ENCODE measurements at regions of chr3 and their contacts with region 1.

Region 1: DNA sequence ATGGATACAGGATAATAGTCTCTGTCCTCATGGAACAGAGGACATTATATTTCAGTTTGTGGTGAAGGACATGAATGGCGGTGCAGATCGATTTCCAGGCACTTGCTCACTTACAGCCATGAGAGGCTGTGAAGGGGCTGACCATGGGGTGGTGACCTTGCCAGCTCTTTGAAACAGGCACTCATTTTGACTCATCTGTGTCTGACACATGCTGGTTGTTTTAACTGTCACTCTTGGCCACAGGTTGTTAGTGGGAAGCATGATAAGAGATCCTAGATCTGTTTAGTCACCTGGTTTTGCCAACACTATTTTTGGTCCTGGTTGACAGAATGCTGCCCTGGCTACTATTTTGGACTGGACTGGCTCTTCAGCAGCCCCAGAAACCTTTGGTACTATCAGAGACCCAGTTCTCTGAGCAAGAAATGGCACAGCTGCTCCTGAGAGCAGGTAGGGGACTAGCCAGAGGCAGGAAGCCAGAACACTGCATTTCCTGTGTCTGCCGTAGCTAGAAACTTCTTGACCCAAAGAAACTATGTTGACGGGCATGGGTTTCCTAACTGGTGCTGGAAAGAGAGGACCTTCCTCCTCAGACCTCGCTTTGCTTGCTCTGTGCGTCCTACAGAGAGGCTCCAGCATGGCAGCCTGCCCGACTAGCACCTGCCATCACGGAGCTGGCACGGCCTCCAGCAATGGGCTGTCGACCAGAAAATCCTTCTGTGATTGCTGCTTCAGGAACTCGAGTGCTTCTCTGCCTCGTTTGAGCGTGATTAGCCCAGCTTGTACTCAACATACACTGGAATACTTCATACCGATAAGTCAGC is 6.3 kb downstream of the PXYLP1 start:
- DNase-seq: no peak
- ATAC-seq: no peak
- H3K4me3 ChIP-seq: no peak overlapping the region
- H3K27ac ChIP-seq: no peak overlapping the region
- H3K4me1 ChIP-seq: peaks cover 61% of the 10 kb centered on the region
- H3K27me3 ChIP-seq: no peaks in the 10 kb centered on the region
- CTCF ChIP-seq: no peak
- EP300 ChIP-seq: no peak
- POLR2A ChIP-seq: no peak
- RAD21 ChIP-seq: no peak

Region 2: GRCh38 chr3:141030296-141030695 is 207.6 kb before region 1 on chr3:
- CTCF ChIA-PET with region 1: no interaction called
- POLR2A ChIA-PET with region 1: no interaction called
- in situ Hi-C with region 1: no loop called
- intact Hi-C with region 1: no loop called
- DNase-seq: no peak
- ATAC-seq: no peak
- H3K4me3 ChIP-seq: no peak overlapping the region
- H3K27ac ChIP-seq: no peak overlapping the region
- H3K4me1 ChIP-seq: no peaks in the 10 kb centered on the region
- H3K27me3 ChIP-seq: no peaks in the 10 kb centered on the region
- CTCF ChIP-seq: no peak
- EP300 ChIP-seq: no peak
- POLR2A ChIP-seq: no peak
- RAD21 ChIP-seq: no peak

Region 3: DNA sequence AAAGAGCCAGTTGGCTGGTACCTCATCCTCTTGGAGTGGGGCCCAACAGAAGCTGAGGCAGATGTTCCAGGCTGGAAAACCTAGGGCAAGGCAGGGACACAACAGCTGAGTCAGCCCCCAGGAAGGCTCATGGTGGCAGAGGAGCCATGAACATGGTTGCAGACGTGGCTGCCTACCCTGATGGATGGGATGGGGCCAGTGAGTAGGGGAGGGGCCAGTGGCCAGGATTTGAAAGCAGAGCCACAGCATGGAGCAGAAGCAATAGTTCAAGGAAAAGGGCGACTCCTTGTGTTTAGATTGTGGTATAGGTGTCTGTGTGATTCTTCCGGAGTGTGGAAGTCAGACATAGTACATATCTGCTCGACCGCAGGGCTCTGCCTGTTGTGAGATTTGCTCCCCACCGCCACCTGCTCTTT is 17.9 kb after region 1 on chr3:
- CTCF ChIA-PET with region 1: interaction called, 14 read pairs
- POLR2A ChIA-PET with region 1: no interaction called
- in situ Hi-C with region 1: no loop called
- intact Hi-C with region 1: loop called (anchors 1 kb)
- DNase-seq: peak; percentile 35
- ATAC-seq: peak; percentile 95
- H3K4me3 ChIP-seq: no peak overlapping the region
- H3K27ac ChIP-seq: no peak overlapping the region
- H3K4me1 ChIP-seq: no peaks in the 10 kb centered on the region
- H3K27me3 ChIP-seq: no peaks in the 10 kb centered on the region
- CTCF ChIP-seq: peak; percentile 69
- EP300 ChIP-seq: no peak
- POLR2A ChIP-seq: no peak
- RAD21 ChIP-seq: peak; percentile 52; the same call in 1 of the 2 replicates

Region 4: GRCh38 chr3:141271279-141272030 is 33.5 kb after region 1 on chr3:
- CTCF ChIA-PET with region 1: no interaction called
- POLR2A ChIA-PET with region 1: interaction called, 3 read pairs
- in situ Hi-C with region 1: loop called (anchors 5 kb)
- intact Hi-C with region 1: no loop called
- DNase-seq: peak; percentile 52
- ATAC-seq: peak; percentile 88
- H3K4me3 ChIP-seq: no peak overlapping the region; a peak in 1 of 6 replicates
- H3K27ac ChIP-seq: peak overlapping the region; percentile 33
- H3K4me1 ChIP-seq: peaks cover 37% of the 10 kb centered on the region
- H3K27me3 ChIP-seq: no peaks in the 10 kb centered on the region; a peak in 1 of 5 replicates
- CTCF ChIP-seq: no peak
- EP300 ChIP-seq: 0 out of 4 replicates have a peak, but pooled peaks of 1 of the 2 experiments have one; percentile 15
- POLR2A ChIP-seq: no peak
- RAD21 ChIP-seq: no peak

Region 5: GRCh38 chr3:141279077-141279967 is 41.4 kb after region 1 on chr3:
- CTCF ChIA-PET with region 1: interaction called, 15 read pairs
- POLR2A ChIA-PET with region 1: no interaction called
- in situ Hi-C with region 1: loop called (anchors 5 kb)
- intact Hi-C with region 1: loop called (anchors 1 kb)
- DNase-seq: peak; percentile 23
- ATAC-seq: peak; percentile 81
- H3K4me3 ChIP-seq: no peak overlapping the region
- H3K27ac ChIP-seq: no peak overlapping the region
- H3K4me1 ChIP-seq: peaks cover 12% of the 10 kb centered on the region
- H3K27me3 ChIP-seq: no peaks in the 10 kb centered on the region
- CTCF ChIP-seq: peak; percentile 73
- EP300 ChIP-seq: no peak
- POLR2A ChIP-seq: no peak
- RAD21 ChIP-seq: no peak; the same call in 1 of the 2 replicates

Region 6: GRCh38 chr3:141291559-141292355 is 53.8 kb after region 1 on chr3:
- CTCF ChIA-PET with region 1: no interaction called
- POLR2A ChIA-PET with region 1: no interaction called
- in situ Hi-C with region 1: no loop called
- intact Hi-C with region 1: no loop called
- DNase-seq: no peak
- ATAC-seq: no peak
- H3K4me3 ChIP-seq: no peak overlapping the region
- H3K27ac ChIP-seq: no peak overlapping the region
- H3K4me1 ChIP-seq: no peaks in the 10 kb centered on the region
- H3K27me3 ChIP-seq: no peaks in the 10 kb centered on the region
- CTCF ChIP-seq: no peak
- EP300 ChIP-seq: no peak
- POLR2A ChIP-seq: no peak
- RAD21 ChIP-seq: no peak

Region 7: GRCh38 chr3:141452036-141452435 is 214.1 kb after region 1 on chr3:
- CTCF ChIA-PET with region 1: no interaction called
- POLR2A ChIA-PET with region 1: no interaction called
- in situ Hi-C with region 1: no loop called
- intact Hi-C with region 1: loop called (anchors 5 kb)
- DNase-seq: peak; percentile 59
- ATAC-seq: peak; percentile 67
- H3K4me3 ChIP-seq: no peak overlapping the region
- H3K27ac ChIP-seq: no peak overlapping the region
- H3K4me1 ChIP-seq: peaks cover 45% of the 10 kb centered on the region
- H3K27me3 ChIP-seq: no peaks in the 10 kb centered on the region
- CTCF ChIP-seq: peak; percentile 84
- EP300 ChIP-seq: no peak
- POLR2A ChIP-seq: no peak
- RAD21 ChIP-seq: peak; percentile 65

Measured in HepG2 (cell line).